CD8-positive, alpha-beta T cell (primary cell): ENCODE measurements at regions of chr10 and their contacts with region 1.

Region 1: DNA sequence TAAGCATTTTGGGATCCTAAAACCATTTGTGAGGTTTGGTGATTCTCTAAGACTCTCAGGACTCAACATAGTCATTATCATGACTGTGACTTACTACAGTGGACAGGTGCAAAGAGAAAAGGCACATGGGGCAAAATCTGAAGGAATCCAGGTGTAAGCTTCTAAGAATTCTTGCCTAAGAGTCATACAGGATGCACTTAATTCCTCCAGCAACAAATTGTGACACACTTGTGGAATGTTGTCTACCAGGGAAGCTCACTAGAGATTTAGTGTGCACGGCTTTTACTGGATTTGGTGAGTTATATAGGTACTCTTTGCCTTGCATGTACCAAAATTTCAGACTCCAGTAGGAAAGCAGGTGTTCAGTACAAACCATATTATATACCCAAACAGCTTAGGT is 47.9 kb downstream of the WAC start:
- DNase-seq: no peak
- ATAC-seq: no peak
- H3K4me3 ChIP-seq: no peak overlapping the region
- H3K4me3 Mint-ChIP-seq: no peak overlapping the region
- H3K27ac ChIP-seq: no peak overlapping the region
- H3K27ac Mint-ChIP-seq: peak overlapping the region; percentile 15
- H3K4me1 ChIP-seq: peaks cover 28% of the 10 kb centered on the region
- H3K4me1 Mint-ChIP-seq: peaks cover 79% of the 10 kb centered on the region
- H3K27me3 ChIP-seq: no peaks in the 10 kb centered on the region
- H3K27me3 Mint-ChIP-seq: no peaks in the 10 kb centered on the region
- CTCF ChIP-seq: no peak

Region 2: GRCh38 chr10:28523725-28524252 is 57.0 kb before region 1 on chr10:
- CTCF ChIA-PET with region 1: no interaction called
- POLR2A ChIA-PET with region 1: no interaction called
- intact Hi-C with region 1: no loop called
- DNase-seq: no peak
- ATAC-seq: no peak
- H3K4me3 ChIP-seq: no peak overlapping the region
- H3K4me3 Mint-ChIP-seq: no peak overlapping the region
- H3K27ac ChIP-seq: no peak overlapping the region
- H3K27ac Mint-ChIP-seq: no peak overlapping the region
- H3K4me1 ChIP-seq: no peaks in the 10 kb centered on the region
- H3K4me1 Mint-ChIP-seq: peaks cover 10% of the 10 kb centered on the region
- H3K27me3 ChIP-seq: no peaks in the 10 kb centered on the region
- H3K27me3 Mint-ChIP-seq: no peaks in the 10 kb centered on the region
- CTCF ChIP-seq: no peak

Region 3: GRCh38 chr10:28538595-28538994 is 42.2 kb before region 1 on chr10:
- CTCF ChIA-PET with region 1: no interaction called
- POLR2A ChIA-PET with region 1: no interaction called
- intact Hi-C with region 1: loop called (anchors 5 kb)
- DNase-seq: peak in 2 of 9 experiments; percentile 31 to 55
- ATAC-seq: no peak
- H3K4me3 ChIP-seq: no peak overlapping the region
- H3K4me3 Mint-ChIP-seq: no peak overlapping the region
- H3K27ac ChIP-seq: no peak overlapping the region
- H3K27ac Mint-ChIP-seq: no peak overlapping the region
- H3K4me1 ChIP-seq: peaks cover 49% of the 10 kb centered on the region
- H3K4me1 Mint-ChIP-seq: peaks cover 80% of the 10 kb centered on the region
- H3K27me3 ChIP-seq: no peaks in the 10 kb centered on the region
- H3K27me3 Mint-ChIP-seq: no peaks in the 10 kb centered on the region
- CTCF ChIP-seq: no peak

Region 4: GRCh38 chr10:28545967-28546644 is 34.7 kb before region 1 on chr10:
- CTCF ChIA-PET with region 1: no interaction called
- POLR2A ChIA-PET with region 1: interaction called, 3 read pairs
- intact Hi-C with region 1: loop called in 1 of 2 experiments (anchors 5 kb)
- DNase-seq: peak in 2 of 9 experiments; percentile 16 to 37
- ATAC-seq: peak; percentile 49
- H3K4me3 ChIP-seq: no peak overlapping the region
- H3K4me3 Mint-ChIP-seq: peak overlapping the region; percentile 5
- H3K27ac ChIP-seq: no peak overlapping the region
- H3K27ac Mint-ChIP-seq: peak overlapping the region; percentile 2
- H3K4me1 ChIP-seq: peaks cover 49% of the 10 kb centered on the region
- H3K4me1 Mint-ChIP-seq: peaks cover 79% of the 10 kb centered on the region
- H3K27me3 ChIP-seq: no peaks in the 10 kb centered on the region
- H3K27me3 Mint-ChIP-seq: no peaks in the 10 kb centered on the region
- CTCF ChIP-seq: no peak

Region 5: DNA sequence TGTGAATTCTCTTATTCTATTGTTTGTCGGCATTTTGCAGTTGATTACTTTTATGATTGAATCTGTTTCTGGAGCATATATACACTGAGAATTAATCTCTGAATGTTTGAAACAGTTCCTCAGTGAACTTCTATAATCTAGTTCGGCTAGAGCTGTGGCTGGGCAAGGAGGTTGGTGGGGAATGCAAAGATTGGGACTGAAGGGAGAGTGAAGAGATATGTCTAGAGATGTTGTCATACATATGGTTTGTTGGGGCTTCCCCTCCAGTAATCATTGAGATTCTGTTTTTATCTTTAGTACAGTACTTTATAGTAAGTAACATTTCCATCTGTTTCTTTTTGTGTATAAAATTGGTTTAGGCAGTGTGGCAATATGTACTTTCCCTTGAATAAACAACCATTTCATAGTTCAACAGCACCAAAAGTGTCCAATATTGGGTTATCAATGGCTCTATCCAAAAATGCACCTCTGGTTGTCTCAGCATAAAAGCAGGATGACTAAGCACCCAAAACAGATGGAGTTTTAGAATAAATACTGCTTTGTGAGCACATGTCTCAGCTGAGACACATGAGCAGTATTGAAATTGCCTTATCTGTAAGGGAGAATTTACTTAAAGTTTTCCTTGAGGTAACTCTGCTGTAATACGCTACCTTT is 11.2 kb before region 1 on chr10:
- CTCF ChIA-PET with region 1: interaction called, 4 read pairs
- POLR2A ChIA-PET with region 1: interaction called, 3 read pairs
- intact Hi-C with region 1: loop called in 1 of 2 experiments (anchors 1 kb)
- DNase-seq: no peak
- ATAC-seq: no peak
- H3K4me3 ChIP-seq: no peak overlapping the region
- H3K4me3 Mint-ChIP-seq: peak overlapping the region; percentile 6
- H3K27ac ChIP-seq: no peak overlapping the region
- H3K27ac Mint-ChIP-seq: peak overlapping the region; percentile 29
- H3K4me1 ChIP-seq: peaks cover 64% of the 10 kb centered on the region
- H3K4me1 Mint-ChIP-seq: peaks cover 87% of the 10 kb centered on the region
- H3K27me3 ChIP-seq: no peaks in the 10 kb centered on the region
- H3K27me3 Mint-ChIP-seq: no peaks in the 10 kb centered on the region
- CTCF ChIP-seq: no peak

Region 6: GRCh38 chr10:28600056-28600455 is 19.2 kb after region 1 on chr10:
- CTCF ChIA-PET with region 1: no interaction called
- POLR2A ChIA-PET with region 1: no interaction called
- intact Hi-C with region 1: no loop called
- DNase-seq: no peak
- ATAC-seq: no peak
- H3K4me3 ChIP-seq: no peak overlapping the region
- H3K4me3 Mint-ChIP-seq: no peak overlapping the region
- H3K27ac ChIP-seq: no peak overlapping the region
- H3K27ac Mint-ChIP-seq: peak overlapping the region; percentile 20
- H3K4me1 ChIP-seq: peaks cover 25% of the 10 kb centered on the region
- H3K4me1 Mint-ChIP-seq: peaks cover 68% of the 10 kb centered on the region
- H3K27me3 ChIP-seq: no peaks in the 10 kb centered on the region
- H3K27me3 Mint-ChIP-seq: no peaks in the 10 kb centered on the region
- CTCF ChIP-seq: no peak